ENCODE measurements at regions of chr1 and their contacts with region 1.

Region 1: DNA sequence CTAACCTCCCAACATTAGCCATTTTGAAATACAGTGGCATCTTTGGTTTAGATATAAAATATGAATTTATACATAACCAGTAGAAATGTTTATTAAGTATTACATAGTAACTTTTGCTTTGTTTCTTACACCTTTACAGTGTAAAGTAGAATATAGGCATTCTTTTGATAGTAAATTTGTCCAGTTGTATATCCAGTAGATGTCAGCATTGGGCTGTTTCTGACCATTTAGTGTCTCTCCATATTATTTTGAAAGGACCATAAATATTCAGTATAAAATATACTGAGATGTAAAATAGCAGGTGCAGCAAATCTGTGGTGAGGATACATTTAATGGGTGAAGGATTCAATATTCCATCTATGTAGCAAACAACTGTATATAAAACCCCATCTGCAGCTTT is 115.8 kb upstream of the ZRANB2 start:
- DNase-seq: no peak
- ATAC-seq: no peak
- H3K4me3 Mint-ChIP-seq: no peak overlapping the region
- H3K27ac Mint-ChIP-seq: no peak overlapping the region
- H3K4me1 Mint-ChIP-seq: no peaks in the 10 kb centered on the region
- H3K27me3 Mint-ChIP-seq: no peaks in the 10 kb centered on the region
- CTCF ChIP-seq: no peak

Region 2: DNA sequence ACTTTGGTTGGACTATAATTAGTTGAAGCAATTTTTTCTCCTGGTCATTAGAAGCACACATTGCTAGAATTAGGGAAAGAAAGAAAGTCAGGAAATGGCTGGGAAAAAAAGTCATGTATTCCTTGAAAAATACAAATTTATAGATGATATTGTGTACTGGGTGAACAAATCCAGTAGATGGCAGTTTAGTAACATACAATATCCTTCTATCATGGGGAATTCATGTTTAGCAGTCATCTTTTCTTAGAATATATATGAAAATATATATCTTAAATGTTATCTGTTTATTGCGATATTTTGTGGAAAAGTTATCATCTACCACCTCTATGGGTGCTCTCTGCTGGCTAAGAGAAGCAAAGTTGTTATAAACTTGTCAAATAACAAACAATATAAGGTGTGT is 102.7 kb before region 1 on chr1:
- CTCF ChIA-PET with region 1: no interaction called
- POLR2A ChIA-PET with region 1: no interaction called
- DNase-seq: no peak
- ATAC-seq: no peak
- H3K4me3 Mint-ChIP-seq: no peak overlapping the region
- H3K27ac Mint-ChIP-seq: no peak overlapping the region
- H3K4me1 Mint-ChIP-seq: no peaks in the 10 kb centered on the region
- H3K27me3 Mint-ChIP-seq: no peaks in the 10 kb centered on the region
- CTCF ChIP-seq: no peak

Region 3: DNA sequence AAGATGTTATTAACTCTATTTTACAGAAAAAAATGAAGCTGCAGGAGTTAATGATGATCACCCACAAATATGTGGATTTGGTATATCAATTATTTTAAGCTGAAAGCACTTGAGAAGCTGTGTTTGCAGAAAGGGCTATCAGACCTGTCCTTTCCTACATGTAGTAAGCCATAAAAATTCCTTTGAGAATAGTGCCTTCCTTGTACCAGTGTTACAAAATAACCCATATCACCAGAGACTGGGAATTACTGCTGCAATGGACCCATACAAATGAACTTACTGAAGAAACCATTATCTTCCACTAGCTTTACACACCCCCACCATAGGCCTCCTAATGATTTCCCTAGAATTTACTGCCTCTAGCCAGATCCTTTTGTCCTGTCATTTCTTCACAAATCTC is 16.7 kb before region 1 on chr1:
- CTCF ChIA-PET with region 1: no interaction called
- POLR2A ChIA-PET with region 1: no interaction called
- DNase-seq: no peak
- ATAC-seq: no peak
- H3K4me3 Mint-ChIP-seq: no peak overlapping the region
- H3K27ac Mint-ChIP-seq: no peak overlapping the region
- H3K4me1 Mint-ChIP-seq: peaks cover 19% of the 10 kb centered on the region
- H3K27me3 Mint-ChIP-seq: no peaks in the 10 kb centered on the region
- CTCF ChIP-seq: no peak

Region 4: DNA sequence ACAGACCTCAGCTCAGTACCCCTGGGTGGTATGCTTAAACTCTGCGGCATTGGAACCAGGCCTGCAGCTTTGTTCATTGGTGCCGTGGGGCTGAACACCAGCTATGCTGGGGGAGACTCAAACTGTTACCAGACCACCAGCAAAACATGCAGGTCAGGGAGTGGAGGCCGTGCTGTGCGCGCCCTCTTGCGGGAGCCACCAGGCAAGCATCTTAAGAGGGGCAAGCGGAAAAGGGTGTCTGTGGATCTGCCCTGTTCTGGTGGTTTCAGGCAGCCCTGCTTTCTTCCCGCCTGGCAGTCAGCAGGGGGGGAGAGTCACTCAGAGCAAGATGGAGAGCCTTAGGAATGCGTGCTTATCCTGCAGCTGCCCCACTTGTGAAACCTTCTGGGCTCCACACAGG is 161.0 kb after region 1 on chr1:
- CTCF ChIA-PET with region 1: interaction called, 12 read pairs
- POLR2A ChIA-PET with region 1: no interaction called
- DNase-seq: peak; percentile 72
- ATAC-seq: peak; percentile 98
- H3K4me3 Mint-ChIP-seq: no peak overlapping the region
- H3K27ac Mint-ChIP-seq: no peak overlapping the region
- H3K4me1 Mint-ChIP-seq: no peaks in the 10 kb centered on the region
- H3K27me3 Mint-ChIP-seq: no peaks in the 10 kb centered on the region; the same call in 1 of the 2 replicates
- CTCF ChIP-seq: peak; percentile 39; the same call in 1 of the 2 replicates